ENCODE measurements at regions of chr11 and their contacts with region 1.

Region 1: GRCh38 chr11:128884703-128885338 is 6.3 kb upstream of the KCNJ5 start:
- DNase-seq: peak; percentile 14
- H3K4me3 ChIP-seq: no peak overlapping the region
- H3K27me3 ChIP-seq: peaks cover 26% of the 10 kb centered on the region
- CTCF ChIP-seq: peak; percentile 77

Region 2: DNA sequence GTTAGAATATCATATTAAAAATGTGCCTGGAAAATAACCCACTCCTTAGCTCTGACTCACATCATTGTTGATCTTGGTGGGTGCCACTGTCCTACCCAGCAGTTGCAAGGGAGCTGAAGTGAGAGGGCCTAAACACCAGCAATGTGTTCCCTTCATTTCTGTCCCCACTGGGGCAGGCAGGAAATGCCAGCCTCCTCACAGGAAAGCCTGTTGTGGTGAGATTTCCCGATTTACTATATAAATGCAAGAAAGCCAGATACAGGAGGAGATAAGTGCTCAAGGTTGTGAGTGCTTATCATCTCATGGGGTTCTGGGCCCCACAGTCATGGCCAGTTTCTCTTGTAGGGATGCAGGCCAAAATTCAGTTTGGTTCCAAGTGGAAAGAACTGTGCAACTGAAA is 206.8 kb before region 1 on chr11:
- CTCF ChIA-PET with region 1: no interaction called
- POLR2A ChIA-PET with region 1: no interaction called
- DNase-seq: no peak
- H3K4me3 ChIP-seq: no peak overlapping the region
- H3K27me3 ChIP-seq: peaks cover 7% of the 10 kb centered on the region
- CTCF ChIP-seq: no peak

Region 3: GRCh38 chr11:128841461-128842072 is 43.3 kb before region 1 on chr11:
- CTCF ChIA-PET with region 1: no interaction called
- POLR2A ChIA-PET with region 1: no interaction called
- DNase-seq: no peak
- H3K4me3 ChIP-seq: no peak overlapping the region
- H3K27me3 ChIP-seq: peaks cover 18% of the 10 kb centered on the region
- CTCF ChIP-seq: no peak

Region 4: GRCh38 chr11:128865490-128865889 is 19.3 kb before region 1 on chr11:
- CTCF ChIA-PET with region 1: interaction called, 21 read pairs
- POLR2A ChIA-PET with region 1: no interaction called
- DNase-seq: no peak
- H3K4me3 ChIP-seq: no peak overlapping the region
- H3K27me3 ChIP-seq: no peaks in the 10 kb centered on the region; the same call in 1 of the 2 replicates
- CTCF ChIP-seq: no peak

Region 5: GRCh38 chr11:128905345-128906184 is 20.7 kb after region 1 on chr11:
- CTCF ChIA-PET with region 1: interaction called, 48 read pairs
- POLR2A ChIA-PET with region 1: no interaction called
- DNase-seq: no peak
- H3K4me3 ChIP-seq: peak overlapping the region; percentile 51
- H3K27me3 ChIP-seq: 0 out of 2 replicates have a peak, but pooled peaks cover 2% of the 10 kb centered on the region
- CTCF ChIP-seq: peak; percentile 66

Region 6: DNA sequence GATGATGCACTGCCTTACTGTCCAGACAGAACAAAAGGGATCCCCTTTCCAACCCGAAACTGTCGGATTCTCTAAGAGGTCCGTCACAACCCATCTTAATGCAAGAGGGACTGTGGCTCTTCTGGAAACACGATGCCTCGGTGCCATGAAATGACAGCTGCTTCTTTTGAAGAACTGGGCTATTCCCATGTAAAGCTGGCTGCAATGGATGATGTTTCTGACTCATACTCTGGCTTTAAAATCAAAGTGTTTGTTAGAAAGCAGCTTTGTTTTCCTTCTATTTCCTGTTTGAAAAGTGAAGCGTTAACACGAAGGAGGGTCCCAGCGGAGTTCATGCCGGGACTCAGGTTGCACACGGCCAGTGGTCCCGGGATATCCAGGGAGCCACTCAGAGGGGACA is 54.8 kb after region 1 on chr11:
- CTCF ChIA-PET with region 1: interaction called, 83 read pairs
- POLR2A ChIA-PET with region 1: no interaction called
- DNase-seq: no peak
- H3K4me3 ChIP-seq: no peak overlapping the region
- H3K27me3 ChIP-seq: peaks cover 19% of the 10 kb centered on the region
- CTCF ChIP-seq: no peak

Region 7: DNA sequence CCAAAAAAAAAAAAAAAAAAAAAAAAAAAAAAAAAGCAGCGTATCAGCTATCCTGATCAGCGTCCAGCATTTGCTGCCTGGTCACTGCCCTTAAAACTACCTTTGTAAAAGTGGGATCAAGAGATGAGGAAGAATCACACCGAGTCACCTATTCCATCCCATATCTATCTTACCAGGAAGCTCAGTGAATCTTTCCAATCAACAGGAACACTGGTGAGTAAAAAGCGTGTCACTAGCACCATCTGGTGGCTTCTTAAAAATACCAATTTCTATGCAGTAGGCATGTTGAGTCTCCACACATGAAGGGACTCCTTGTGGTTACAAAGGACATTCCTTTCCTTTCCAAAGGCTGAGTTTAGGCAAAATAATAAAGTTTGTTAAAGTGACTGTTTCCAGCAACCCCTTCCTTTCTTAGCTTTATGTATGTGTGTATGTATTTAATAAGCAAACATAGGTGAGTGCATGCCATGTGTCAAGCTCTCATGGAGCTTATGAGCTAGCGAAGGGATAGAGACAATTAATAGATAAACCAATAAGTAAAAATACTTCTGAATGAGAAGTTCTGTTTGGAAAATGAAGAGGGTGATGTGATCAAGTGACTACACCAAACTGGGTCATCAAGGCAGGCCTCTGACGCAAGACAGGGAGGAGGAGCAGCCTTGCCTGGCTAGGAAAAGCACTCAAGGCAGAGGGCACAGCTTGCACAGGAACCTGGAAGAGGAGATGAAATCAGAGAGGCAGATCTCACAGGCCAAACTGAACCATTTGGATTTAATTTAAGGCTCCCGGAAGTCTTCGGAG is 71.8 kb after region 1 on chr11:
- CTCF ChIA-PET with region 1: interaction called, 253 read pairs
- POLR2A ChIA-PET with region 1: interaction called, 3 read pairs
- DNase-seq: peak; percentile 26
- H3K4me3 ChIP-seq: no peak overlapping the region
- H3K27me3 ChIP-seq: peaks cover 1% of the 10 kb centered on the region
- CTCF ChIP-seq: peak; percentile 65

Measured in BJ (cell line).